Lower leg skin (tissue), 4 donors: ENCODE measurements at regions of chr10 and their contacts with region 1.

Region 1: DNA sequence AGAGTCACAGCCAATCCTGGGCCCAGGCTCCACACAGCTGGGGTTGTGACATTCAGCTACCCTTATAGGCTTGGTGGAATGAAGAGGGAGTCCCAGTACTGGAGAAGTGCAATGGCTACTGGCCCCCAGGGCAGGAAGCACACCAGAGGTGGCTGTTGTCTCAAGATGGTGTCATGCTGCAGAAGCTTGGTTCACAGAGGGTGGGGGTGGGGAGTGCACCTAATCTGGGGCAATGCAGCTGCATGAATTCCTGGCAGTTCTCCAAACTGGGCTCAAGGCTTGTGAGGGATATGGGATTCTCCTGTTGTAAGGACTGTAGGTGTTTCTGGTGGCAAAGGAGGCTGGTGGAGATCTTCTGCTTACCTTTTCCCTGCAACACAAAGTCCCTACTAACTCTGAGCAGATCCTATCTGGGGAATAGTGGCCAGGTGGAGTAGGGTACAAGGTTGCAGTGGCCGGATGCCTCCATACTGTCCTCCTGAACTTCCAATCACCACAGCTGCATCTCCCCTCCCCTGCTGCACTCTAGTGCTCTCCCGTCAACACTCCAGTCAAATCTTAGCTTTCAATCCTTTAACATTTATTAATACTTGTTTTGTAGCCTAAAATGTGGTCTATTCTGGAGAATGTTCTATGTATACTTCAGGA is 27.4 kb upstream of the PLA2G12B start:
- DNase-seq: no peak
- H3K4me3 ChIP-seq: no peak overlapping the region
- CTCF ChIP-seq: no peak
- POLR2A ChIP-seq: no peak

Region 2: GRCh38 chr10:72419241-72419640 is 562.8 kb before region 1 on chr10:
- intact Hi-C with region 1: no loop called
- DNase-seq: no peak
- H3K4me3 ChIP-seq: no peak overlapping the region
- CTCF ChIP-seq: no peak
- POLR2A ChIP-seq: no peak

Region 3: GRCh38 chr10:72956001-72956400 is 26.0 kb before region 1 on chr10:
- intact Hi-C with region 1: loop called (anchors 1 kb)
- DNase-seq: no peak
- H3K4me3 ChIP-seq: no peak overlapping the region
- CTCF ChIP-seq: no peak
- POLR2A ChIP-seq: no peak